A549 (cell line): ENCODE measurements at regions of chr3 and their contacts with region 1.

Region 1: DNA sequence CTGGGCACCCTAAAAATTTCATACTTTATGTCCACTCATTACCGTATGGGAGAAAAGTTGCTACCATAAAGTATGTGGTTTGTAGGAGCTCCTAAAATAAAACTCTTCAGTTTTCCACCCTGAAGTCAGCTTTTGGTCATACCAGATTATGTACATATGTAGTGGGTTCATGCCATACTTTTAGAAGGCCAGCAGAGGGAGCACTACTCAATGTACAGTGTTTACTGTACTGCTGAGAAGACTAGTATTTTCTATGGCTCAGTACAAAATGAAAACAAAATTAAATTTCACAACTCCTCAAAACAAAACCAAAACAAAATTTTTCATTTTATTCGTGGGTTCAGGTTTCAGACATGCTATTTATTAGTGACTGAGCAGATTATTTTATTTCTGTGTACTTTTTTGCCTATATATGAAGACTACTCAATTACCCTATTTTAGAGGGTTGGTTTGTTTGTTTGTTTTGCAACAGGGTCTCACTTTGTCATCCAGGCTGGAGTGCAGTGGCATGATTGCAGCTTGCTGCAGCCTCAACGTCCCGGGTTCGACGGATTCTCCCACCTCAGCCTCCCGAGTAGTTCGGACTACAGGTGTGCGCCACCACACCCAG is 24.3 kb downstream of the NXPE3 start:
- DNase-seq: peak; percentile 54 to 76
- ATAC-seq: peak; percentile 99
- H3K4me3 ChIP-seq: no peak overlapping the region
- H3K27ac ChIP-seq: no peak overlapping the region
- H3K4me1 ChIP-seq: no peaks in the 10 kb centered on the region
- CTCF ChIP-seq: peak; percentile 87
- EP300 ChIP-seq: no peak
- POLR2A ChIP-seq: no peak
- RAD21 ChIP-seq: peak; percentile 44 to 51; a peak in 4 of 5 replicates

Region 2: GRCh38 chr3:101784855-101785613 is 18.2 kb before region 1 on chr3:
- CTCF ChIA-PET with region 1: interaction called, 12 read pairs
- POLR2A ChIA-PET with region 1: no interaction called
- DNase-seq: no peak
- ATAC-seq: no peak
- H3K4me3 ChIP-seq: no peak overlapping the region
- H3K27ac ChIP-seq: no peak overlapping the region
- H3K4me1 ChIP-seq: peaks cover 13% of the 10 kb centered on the region; the same call in 2 of the 3 replicates
- CTCF ChIP-seq: no peak
- EP300 ChIP-seq: no peak
- POLR2A ChIP-seq: no peak
- RAD21 ChIP-seq: no peak

Region 3: GRCh38 chr3:101791778-101792177 is 11.5 kb before region 1 on chr3:
- CTCF ChIA-PET with region 1: interaction called, 33 read pairs
- POLR2A ChIA-PET with region 1: no interaction called
- DNase-seq: no peak
- ATAC-seq: no peak
- H3K4me3 ChIP-seq: no peak overlapping the region
- H3K27ac ChIP-seq: no peak overlapping the region
- H3K4me1 ChIP-seq: no peaks in the 10 kb centered on the region
- CTCF ChIP-seq: no peak
- EP300 ChIP-seq: no peak
- POLR2A ChIP-seq: no peak
- RAD21 ChIP-seq: no peak

Region 4: DNA sequence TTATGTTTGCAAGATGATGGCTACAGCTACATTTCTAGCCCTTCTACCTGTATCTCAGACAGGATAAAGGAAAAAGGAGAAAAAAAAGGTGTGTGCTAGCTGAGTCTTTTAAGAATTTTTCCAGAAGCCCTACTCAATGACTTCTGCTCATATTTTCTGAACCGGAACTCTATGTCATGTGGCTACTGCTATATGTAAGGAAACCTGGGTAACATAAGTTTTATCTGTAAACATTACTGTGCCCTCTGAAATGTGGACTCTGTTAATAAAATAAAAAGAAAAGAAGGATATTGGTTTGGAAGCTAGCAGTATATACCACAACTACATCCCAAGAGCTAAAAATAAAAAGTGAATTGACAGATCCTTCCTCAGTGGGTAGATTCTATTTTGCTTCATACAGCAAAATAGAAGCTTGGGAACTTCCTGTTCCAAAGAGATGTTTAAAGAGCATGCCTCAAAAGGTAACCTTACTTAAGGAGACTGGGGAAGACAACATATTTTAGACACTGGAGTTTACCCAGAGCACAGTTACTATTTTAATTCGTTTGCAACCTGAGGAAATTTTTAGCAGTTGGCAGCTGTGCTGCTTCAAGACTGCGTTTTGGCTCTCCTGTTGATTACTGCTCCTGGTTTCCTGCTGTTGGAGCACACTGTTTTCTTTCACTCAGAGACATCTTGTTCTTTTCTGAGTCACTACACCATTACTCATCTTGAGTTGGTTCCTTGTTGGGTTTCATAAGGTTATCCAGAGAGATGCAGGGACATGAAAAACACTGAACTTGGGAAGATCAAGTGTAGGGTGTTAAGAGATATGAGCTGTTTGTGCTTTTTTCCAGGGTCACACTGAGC is 326.7 kb after region 1 on chr3:
- CTCF ChIA-PET with region 1: no interaction called
- POLR2A ChIA-PET with region 1: no interaction called
- DNase-seq: peak; percentile 11 to 37
- ATAC-seq: peak; percentile 75 to 80
- H3K4me3 ChIP-seq: no peak overlapping the region
- H3K27ac ChIP-seq: peak overlapping the region; percentile 72 to 81
- H3K4me1 ChIP-seq: peaks cover 28% of the 10 kb centered on the region
- CTCF ChIP-seq: no peak
- EP300 ChIP-seq: no peak
- POLR2A ChIP-seq: no peak
- RAD21 ChIP-seq: no peak

Region 5: DNA sequence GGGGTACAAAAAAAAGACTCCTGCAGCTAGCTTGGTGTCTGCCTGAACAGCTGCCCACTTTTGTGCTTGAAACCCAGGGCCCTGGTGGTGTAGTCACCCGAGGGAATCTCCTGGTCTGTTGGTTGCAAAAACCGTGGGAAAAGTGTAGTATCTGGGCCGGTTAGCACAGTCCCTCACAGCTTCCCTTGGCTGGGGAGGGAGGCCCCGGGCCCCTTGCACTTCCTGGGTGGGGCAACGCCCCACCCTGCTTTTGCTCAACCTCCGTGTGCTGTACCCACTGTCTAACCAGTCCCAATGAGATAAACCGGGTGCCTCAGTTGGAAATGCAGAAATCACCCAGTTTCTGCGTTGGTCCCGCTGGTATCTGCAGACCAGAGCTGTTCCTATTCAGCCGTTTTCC is 419.9 kb after region 1 on chr3:
- CTCF ChIA-PET with region 1: interaction called, 186 read pairs
- POLR2A ChIA-PET with region 1: no interaction called
- DNase-seq: no peak
- ATAC-seq: no peak
- H3K4me3 ChIP-seq: no peak overlapping the region
- H3K27ac ChIP-seq: peak overlapping the region; percentile 59 to 73; a peak in 4 of 6 replicates
- H3K4me1 ChIP-seq: peaks cover 8% of the 10 kb centered on the region
- CTCF ChIP-seq: no peak
- EP300 ChIP-seq: no peak
- POLR2A ChIP-seq: no peak
- RAD21 ChIP-seq: no peak

Region 6: GRCh38 chr3:102529452-102529851 is 726.2 kb after region 1 on chr3:
- CTCF ChIA-PET with region 1: interaction called, 14 read pairs
- POLR2A ChIA-PET with region 1: no interaction called
- DNase-seq: peak; percentile 3 to 32
- ATAC-seq: peak; percentile 74 to 77
- H3K4me3 ChIP-seq: no peak overlapping the region
- H3K27ac ChIP-seq: no peak overlapping the region
- H3K4me1 ChIP-seq: no peaks in the 10 kb centered on the region
- CTCF ChIP-seq: peak; percentile 35; the same call in 2 of the 3 replicates
- EP300 ChIP-seq: no peak
- POLR2A ChIP-seq: no peak
- RAD21 ChIP-seq: peak; percentile 59 to 61